Posterior cingulate gyrus (tissue), 11 donors: ENCODE measurements at regions of chr9 and their contacts with region 1.

Region 1: DNA sequence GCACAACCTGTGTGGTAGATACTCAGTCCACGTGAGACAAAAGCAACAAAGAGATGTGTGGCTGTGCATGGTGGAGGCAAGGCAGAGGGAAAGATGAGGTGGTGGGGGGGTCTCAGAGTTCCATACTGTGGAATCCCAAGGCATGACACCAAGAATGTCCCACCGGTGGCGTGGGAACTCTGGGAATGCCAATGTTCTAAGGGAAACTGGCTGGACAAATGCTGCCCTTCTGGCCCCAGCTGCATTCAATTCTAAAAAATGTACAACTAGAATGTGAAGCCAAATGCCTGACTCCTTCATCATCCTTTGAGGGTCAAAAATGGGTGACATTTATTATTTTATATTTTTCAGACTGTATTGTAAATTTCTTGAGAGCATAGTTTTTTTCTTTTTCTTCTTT is 58.2 kb upstream of the EQTN start:
- DNase-seq: no peak

Region 2: DNA sequence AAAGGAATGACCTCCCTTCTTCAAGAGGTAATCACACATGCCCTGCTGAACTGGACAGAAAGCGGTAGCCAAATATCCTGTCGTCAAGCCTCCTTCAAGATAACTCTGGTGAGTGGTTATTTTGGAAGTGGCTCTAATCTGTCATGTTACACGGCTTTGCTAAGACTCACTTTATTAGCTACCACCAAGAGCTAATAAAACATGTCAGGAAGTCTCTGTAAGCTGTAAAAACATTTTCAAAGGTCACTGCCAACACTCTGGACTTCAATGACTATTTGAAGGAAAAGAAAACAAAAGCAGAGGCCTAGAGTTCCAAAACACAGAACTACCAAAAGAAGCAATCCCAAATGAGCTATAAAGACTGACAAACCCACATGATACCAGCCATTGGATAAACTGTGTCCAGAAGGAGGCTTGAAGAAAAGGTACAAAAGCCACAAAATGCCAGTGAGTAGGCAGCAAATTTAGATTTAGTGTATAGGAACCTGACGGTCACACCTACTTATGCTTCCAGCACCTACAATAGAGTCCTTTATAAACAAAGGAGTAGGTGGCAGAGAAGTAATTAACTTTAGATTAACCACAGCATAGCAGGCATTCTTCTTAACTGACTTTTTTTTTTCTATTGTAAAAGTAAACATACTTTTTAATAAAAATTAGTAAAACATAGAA is 39.1 kb after region 1 on chr9:
- intact Hi-C with region 1: loop called (anchors 5 kb)
- DNase-seq: no peak